ENCODE measurements at regions of chr17 and their contacts with region 1.

Region 1: DNA sequence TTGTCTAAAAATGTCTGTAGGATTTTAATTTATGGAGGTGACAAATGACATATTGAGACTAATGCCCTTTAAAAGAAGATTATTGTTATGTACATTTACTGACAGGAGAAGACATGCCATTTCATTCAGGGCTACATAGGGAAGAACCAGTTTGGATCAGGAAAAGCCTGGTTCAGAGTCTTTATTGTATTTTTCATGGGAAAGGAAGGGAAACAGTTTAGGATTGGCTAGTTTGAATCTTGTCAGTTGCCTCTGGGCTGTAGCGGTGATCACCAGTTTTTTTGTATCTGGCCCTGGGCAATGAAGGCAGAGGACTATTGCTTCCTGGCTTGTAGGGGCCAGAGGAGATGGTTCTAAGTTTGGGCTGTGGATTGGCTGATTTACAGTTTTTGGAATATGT is 31.8 kb downstream of the NSRP1 start:
- DNase-seq: no peak
- H3K4me3 ChIP-seq: no peak overlapping the region
- H3K27ac ChIP-seq: no peak overlapping the region
- H3K4me1 ChIP-seq: no peaks in the 10 kb centered on the region
- H3K27me3 ChIP-seq: no peaks in the 10 kb centered on the region
- CTCF ChIP-seq: no peak

Region 2: GRCh38 chr17:30191072-30191471 is 42.7 kb after region 1 on chr17:
- intact Hi-C with region 1: loop called (anchors 1 kb)
- DNase-seq: no peak
- H3K4me3 ChIP-seq: no peak overlapping the region
- H3K27ac ChIP-seq: no peak overlapping the region
- H3K4me1 ChIP-seq: no peaks in the 10 kb centered on the region
- H3K27me3 ChIP-seq: no peaks in the 10 kb centered on the region
- CTCF ChIP-seq: no peak

Measured in tibial artery (tissue), 4 donors.